ENCODE measurements at regions of chr6 and their contacts with region 1.

Region 1: DNA sequence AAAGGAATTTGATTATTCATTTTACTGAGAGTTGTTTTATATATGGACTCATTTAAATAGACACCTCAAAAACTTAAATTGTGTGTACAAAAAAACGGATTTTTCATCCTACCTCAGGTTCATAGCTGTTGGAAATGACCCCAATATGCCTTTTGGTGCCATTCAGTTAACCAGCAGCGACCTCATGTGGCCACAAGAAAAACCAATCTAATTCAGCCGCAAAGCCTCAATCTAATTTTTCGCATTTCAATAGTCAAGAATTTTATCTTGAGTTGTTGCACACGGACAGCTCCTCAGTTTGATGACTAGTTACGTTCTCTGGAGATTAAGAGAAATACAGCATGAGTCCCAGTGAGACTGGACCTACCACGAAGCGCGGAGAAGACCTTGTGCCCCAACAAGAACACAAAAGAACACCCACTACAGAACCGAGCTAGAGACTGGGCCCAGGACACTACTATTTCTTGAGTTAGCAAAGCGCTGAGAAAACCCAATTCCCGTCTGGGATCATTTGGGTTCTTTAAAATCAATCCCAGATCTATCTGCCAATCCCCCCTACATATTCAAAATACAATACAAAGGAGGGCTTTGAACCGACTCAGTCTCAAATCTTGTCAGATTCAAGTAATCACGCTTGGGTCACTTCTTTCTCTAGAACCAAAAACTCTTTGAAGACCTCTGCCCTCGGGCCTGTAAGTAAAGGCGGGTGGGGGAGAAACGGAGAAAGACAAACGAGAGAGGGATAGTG is 1.1 kb downstream of the TCP11 start:
- DNase-seq: no peak
- H3K4me3 ChIP-seq: no peak overlapping the region
- H3K27ac ChIP-seq: no peak overlapping the region
- H3K4me1 ChIP-seq: peaks cover 0 to 11% (median 6%) of the 10 kb centered on the region in 4 donors
- H3K27me3 ChIP-seq: peaks cover 0 to 9% of the 10 kb centered on the region in 2 donors
- CTCF ChIP-seq: peak; percentile 84 to 95

Region 2: GRCh38 chr6:34986845-34987246 is 153.2 kb before region 1 on chr6:
- intact Hi-C with region 1: loop called (anchors 2 kb)
- DNase-seq: peak; percentile 38 to 78
- H3K4me3 ChIP-seq: no peak overlapping the region
- H3K27ac ChIP-seq: no peak overlapping the region
- H3K4me1 ChIP-seq: peaks cover 0 to 11% (median 0%) of the 10 kb centered on the region in 4 donors
- H3K27me3 ChIP-seq: no peaks in the 10 kb centered on the region
- CTCF ChIP-seq: peak; percentile 76 to 92

Measured in tibial artery (tissue), 4 donors.